ENCODE measurements at regions of chr19 and their contacts with region 1.

Region 1: DNA sequence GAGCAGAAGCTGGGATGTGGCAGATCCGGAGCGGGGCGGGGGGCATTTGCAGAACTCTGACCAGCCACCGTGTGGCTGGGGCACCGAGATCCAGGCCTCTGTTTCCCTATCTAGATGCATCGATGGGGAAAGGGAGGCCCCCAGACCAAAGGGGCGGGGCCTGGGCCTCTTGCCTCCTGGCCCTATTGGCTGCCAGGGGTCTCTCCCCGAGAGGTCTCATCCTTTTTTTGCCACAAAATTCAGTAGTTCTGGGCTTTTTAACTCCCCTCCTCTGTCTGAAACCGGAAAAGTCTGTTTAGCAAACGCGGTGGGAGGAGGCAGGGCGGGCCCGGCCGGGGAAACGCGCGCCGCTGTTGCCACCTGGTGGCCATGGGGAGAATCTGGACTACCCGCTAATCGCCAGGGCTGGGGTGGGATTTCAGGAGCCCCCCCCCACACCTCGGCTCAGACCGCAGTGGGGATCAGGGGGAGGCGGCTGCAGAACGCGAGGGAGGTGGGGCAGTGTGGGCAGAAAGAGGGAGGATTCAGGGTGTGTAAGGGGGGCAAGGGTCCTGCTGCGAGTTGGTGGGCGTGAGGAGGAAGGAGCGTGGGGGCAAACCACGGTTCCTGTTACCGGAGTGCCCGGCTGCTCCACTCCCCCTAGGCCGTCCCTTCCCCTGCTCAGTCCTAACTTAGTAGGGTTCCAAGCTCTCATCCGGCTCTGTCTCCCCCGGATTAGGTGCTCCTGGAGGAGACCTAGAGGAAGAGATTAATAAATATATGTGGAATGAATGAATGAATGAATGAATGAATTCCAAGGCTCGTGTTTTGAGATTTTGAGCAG is 28.3 kb downstream of the IL12RB1 start:
- DNase-seq: peak; percentile 86
- ATAC-seq: peak; percentile 89
- H3K4me3 Mint-ChIP-seq: peak overlapping the region; percentile 22
- H3K27ac Mint-ChIP-seq: peak overlapping the region; percentile 74
- H3K4me1 Mint-ChIP-seq: peaks cover 16% of the 10 kb centered on the region
- H3K27me3 Mint-ChIP-seq: no peaks in the 10 kb centered on the region

Region 2: GRCh38 chr19:17915951-17916593 is 142.3 kb before region 1 on chr19:
- CTCF ChIA-PET with region 1: no interaction called
- POLR2A ChIA-PET with region 1: no interaction called
- DNase-seq: no peak
- ATAC-seq: no peak
- H3K4me3 Mint-ChIP-seq: no peak overlapping the region
- H3K27ac Mint-ChIP-seq: no peak overlapping the region
- H3K4me1 Mint-ChIP-seq: no peaks in the 10 kb centered on the region
- H3K27me3 Mint-ChIP-seq: no peaks in the 10 kb centered on the region

Region 3: GRCh38 chr19:18000935-18001778 is 57.3 kb before region 1 on chr19:
- CTCF ChIA-PET with region 1: interaction called, 115 read pairs
- POLR2A ChIA-PET with region 1: interaction called, 12 read pairs
- DNase-seq: peak; percentile 94
- ATAC-seq: peak; percentile 84
- H3K4me3 Mint-ChIP-seq: peak overlapping the region; percentile 92
- H3K27ac Mint-ChIP-seq: peak overlapping the region; percentile 100
- H3K4me1 Mint-ChIP-seq: peaks cover 31% of the 10 kb centered on the region
- H3K27me3 Mint-ChIP-seq: no peaks in the 10 kb centered on the region

Region 4: GRCh38 chr19:18007044-18007916 is 51.1 kb before region 1 on chr19:
- CTCF ChIA-PET with region 1: interaction called, 115 read pairs
- POLR2A ChIA-PET with region 1: interaction called, 12 read pairs
- DNase-seq: peak; percentile 82
- ATAC-seq: peak; percentile 74
- H3K4me3 Mint-ChIP-seq: peak overlapping the region; percentile 74
- H3K27ac Mint-ChIP-seq: peak overlapping the region; percentile 68
- H3K4me1 Mint-ChIP-seq: peaks cover 39% of the 10 kb centered on the region
- H3K27me3 Mint-ChIP-seq: no peaks in the 10 kb centered on the region

Region 5: DNA sequence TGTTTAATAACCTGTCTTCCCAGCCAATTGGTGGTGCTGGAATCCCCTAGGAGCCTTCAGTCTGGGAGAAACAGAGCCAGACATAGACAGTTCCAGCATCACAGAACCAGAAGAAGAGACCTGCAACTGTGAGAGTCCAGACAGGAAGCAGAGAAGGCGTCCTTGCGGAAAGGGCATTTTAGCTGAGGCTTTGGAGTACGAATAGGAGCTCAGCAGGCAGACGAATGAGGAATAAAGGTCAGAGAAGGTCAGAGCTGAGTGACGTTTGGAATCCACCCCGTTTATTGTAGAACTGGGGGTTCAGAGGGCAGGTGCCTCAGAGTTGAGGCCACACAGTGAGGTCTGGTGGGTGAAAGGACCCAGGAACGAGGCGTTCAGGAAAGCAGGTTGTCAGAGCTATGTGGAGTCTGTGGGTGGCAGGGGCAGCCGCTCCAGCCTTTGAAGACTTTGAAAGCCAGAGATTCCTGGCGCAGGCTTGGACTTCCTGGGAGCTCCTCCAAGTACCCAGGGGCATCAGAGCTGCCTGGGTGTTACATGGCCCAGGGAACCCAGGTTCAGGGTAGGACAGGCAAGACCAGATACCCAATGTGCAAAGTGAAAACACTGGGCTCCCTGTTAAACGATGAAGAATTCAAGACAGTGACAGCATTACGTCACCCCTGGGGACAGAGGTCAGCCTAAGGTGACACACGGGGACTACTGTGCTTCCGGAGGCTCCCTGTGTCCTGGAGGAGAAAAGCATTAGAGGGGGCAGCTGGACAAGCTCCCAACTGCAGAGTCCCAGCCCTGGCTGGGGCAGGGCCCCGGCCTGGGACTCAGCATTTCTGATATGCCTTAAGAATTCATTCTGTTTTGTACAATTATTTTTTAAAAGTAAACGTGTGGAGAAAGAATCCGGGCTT is 45.0 kb before region 1 on chr19:
- CTCF ChIA-PET with region 1: interaction called, 115 read pairs
- POLR2A ChIA-PET with region 1: interaction called, 5 read pairs
- DNase-seq: no peak
- ATAC-seq: peak; percentile 17
- H3K4me3 Mint-ChIP-seq: peak overlapping the region; percentile 47
- H3K27ac Mint-ChIP-seq: peak overlapping the region; percentile 87
- H3K4me1 Mint-ChIP-seq: peaks cover 59% of the 10 kb centered on the region
- H3K27me3 Mint-ChIP-seq: no peaks in the 10 kb centered on the region

Region 6: GRCh38 chr19:18021121-18021755 is 37.2 kb before region 1 on chr19:
- CTCF ChIA-PET with region 1: interaction called, 29 read pairs
- POLR2A ChIA-PET with region 1: interaction called, 3 read pairs
- DNase-seq: peak; percentile 47
- ATAC-seq: no peak
- H3K4me3 Mint-ChIP-seq: peak overlapping the region; percentile 56
- H3K27ac Mint-ChIP-seq: peak overlapping the region; percentile 84
- H3K4me1 Mint-ChIP-seq: peaks cover 67% of the 10 kb centered on the region
- H3K27me3 Mint-ChIP-seq: no peaks in the 10 kb centered on the region

Region 7: GRCh38 chr19:18044825-18045304 is 13.6 kb before region 1 on chr19:
- CTCF ChIA-PET with region 1: interaction called, 44 read pairs
- POLR2A ChIA-PET with region 1: interaction called, 3 read pairs
- DNase-seq: peak; percentile 96
- ATAC-seq: peak; percentile 98
- H3K4me3 Mint-ChIP-seq: peak overlapping the region; percentile 58
- H3K27ac Mint-ChIP-seq: peak overlapping the region; percentile 88
- H3K4me1 Mint-ChIP-seq: peaks cover 34% of the 10 kb centered on the region
- H3K27me3 Mint-ChIP-seq: peaks cover 10% of the 10 kb centered on the region

Region 8: GRCh38 chr19:18198374-18198773 is 140.0 kb after region 1 on chr19:
- CTCF ChIA-PET with region 1: no interaction called
- POLR2A ChIA-PET with region 1: no interaction called
- DNase-seq: no peak
- ATAC-seq: no peak
- H3K4me3 Mint-ChIP-seq: no peak overlapping the region
- H3K27ac Mint-ChIP-seq: no peak overlapping the region
- H3K4me1 Mint-ChIP-seq: peaks cover 31% of the 10 kb centered on the region
- H3K27me3 Mint-ChIP-seq: no peaks in the 10 kb centered on the region

Measured in activated CD8-positive, alpha-beta T cell treated with anti-CD3 and anti-CD28 coated beads, Interleukin-2, amount 10 ng/mL, durations not matched to agents 7 days and 5 days (primary cell).